Caco-2 (cell line): ENCODE measurements at regions of chr16 and their contacts with region 1.

Region 1: DNA sequence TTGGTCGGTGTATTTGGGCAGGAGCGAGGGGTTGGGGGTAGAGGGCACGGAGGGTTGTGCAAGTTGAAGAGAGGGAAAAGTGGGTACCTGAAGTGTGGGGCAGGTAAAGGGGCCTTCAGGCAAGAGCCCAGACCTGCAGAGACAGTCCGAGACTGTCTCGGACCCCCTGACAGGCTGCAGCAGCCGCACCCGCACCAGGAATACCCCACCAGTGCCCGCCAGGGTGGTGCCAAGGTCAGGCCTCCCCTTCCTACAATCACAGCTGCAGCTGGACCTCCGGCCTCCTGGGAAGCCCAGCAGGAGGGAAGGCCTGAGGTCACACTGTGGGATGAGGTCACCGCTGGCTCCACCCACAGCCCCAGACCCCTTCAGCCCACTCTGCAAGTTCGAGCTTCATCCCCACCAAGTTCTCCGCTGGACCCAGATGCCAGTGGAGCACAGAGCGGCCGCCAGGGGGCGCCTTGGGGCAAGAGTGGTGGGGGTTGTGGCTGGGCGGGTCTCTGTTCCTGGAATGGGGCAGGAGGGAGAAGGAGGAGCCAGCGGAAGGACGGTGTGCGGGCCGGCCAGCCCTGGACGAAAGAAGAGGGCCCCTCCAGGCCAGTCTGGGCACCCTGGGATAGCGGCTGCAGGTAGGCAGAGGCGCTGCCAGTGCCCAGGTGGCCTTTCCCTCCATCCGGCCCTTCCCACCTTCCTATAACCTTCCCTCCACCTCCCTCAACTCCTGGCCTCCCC is at the start of gene HSD3B7:
- DNase-seq: peak; percentile 83 to 90
- H3K4me3 ChIP-seq: 0 out of 2 replicates have a peak within 1 kb of the TSS, but pooled peaks have one; percentile 15
- H3K4me3 Mint-ChIP-seq: peak within 1 kb of the TSS; percentile 59
- H3K27ac Mint-ChIP-seq: no peak within 1 kb of the TSS
- H3K4me1 ChIP-seq: peaks cover 7% of the 10 kb centered on the region
- H3K4me1 Mint-ChIP-seq: peaks cover 6% of the 10 kb centered on the region
- H3K27me3 ChIP-seq: no peaks in the 10 kb centered on the region
- H3K27me3 Mint-ChIP-seq: no peaks in the 10 kb centered on the region
- CTCF ChIP-seq: peak; percentile 83 to 93
- total RNA-seq, gene HSD3B7: 1.3 and 2.4 TPM in 2 replicates

Region 2: DNA sequence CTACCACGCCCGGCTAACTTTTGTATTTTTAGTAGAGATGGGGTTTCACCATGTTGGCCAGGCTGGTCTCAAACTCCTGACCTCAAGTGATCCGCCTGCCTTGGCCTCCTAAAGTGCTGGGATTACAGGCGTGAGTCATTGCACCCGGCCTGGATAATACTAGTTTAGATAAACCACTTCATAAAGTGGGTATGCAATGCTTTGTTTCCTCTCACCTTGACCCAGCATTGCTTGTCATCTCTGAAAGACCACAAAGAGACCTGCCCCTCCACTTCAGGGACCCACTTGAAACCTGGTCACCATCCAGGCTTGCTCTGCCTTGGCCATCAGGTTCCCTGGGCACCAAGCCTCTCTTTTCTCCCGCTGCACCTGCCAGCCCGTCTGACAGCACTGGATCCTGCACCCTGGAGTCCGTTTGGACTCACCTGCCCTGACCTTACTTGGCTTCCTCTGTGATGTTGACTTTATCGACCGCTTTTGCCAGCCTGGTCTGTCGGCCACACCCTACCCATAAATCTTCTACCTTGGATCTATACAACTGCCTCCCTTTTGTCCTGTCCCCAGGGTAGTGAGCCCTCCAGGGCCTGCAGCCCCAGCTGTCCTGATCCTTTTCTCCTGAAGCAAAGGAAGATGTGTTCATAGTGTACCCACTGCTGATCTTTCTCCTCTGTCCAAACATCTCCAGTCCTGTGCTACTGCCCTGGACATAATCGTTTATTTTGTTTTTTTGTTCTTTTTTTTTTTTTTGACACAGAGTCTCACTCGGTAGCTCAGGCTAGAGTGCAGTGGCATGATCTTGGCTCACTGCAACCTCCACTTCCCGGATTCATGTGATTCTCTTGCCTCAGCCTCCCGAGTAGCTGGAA is 1219.4 kb before region 1 on chr16:
- CTCF ChIA-PET with region 1: no interaction called
- POLR2A ChIA-PET with region 1: no interaction called
- intact Hi-C with region 1: no loop called
- DNase-seq: peak; percentile 42 to 63
- H3K4me3 ChIP-seq: no peak overlapping the region
- H3K4me3 Mint-ChIP-seq: peak overlapping the region; percentile 9
- H3K27ac Mint-ChIP-seq: peak overlapping the region; percentile 70
- H3K4me1 ChIP-seq: peaks cover 15% of the 10 kb centered on the region
- H3K4me1 Mint-ChIP-seq: peaks cover 27% of the 10 kb centered on the region
- H3K27me3 ChIP-seq: no peaks in the 10 kb centered on the region
- H3K27me3 Mint-ChIP-seq: no peaks in the 10 kb centered on the region
- CTCF ChIP-seq: no peak

Region 3: DNA sequence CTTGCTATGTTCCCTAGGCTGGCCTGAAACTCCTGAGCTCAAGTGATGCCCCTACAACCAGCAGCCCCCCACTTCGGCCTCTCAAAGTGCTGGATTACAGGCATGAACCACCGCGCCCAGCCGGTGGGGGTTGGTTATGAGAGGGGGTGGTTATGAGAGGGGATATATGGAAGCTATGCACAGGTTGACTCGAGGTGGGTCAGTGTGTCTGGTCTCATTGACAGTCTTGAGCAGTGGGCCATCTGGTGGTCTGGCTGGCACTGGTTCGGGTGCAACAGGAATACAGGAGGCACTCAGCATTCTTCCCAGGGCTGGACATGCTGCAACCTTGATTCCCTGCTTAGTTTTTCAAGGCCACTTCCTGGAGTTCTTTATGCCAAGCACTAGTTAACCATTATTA is 31.2 kb after region 1 on chr16:
- CTCF ChIA-PET with region 1: no interaction called
- POLR2A ChIA-PET with region 1: no interaction called
- intact Hi-C with region 1: loop called (anchors 2 kb)
- DNase-seq: peak in 1 of 2 experiments; percentile 25
- H3K4me3 ChIP-seq: no peak overlapping the region
- H3K4me3 Mint-ChIP-seq: no peak overlapping the region
- H3K27ac Mint-ChIP-seq: no peak overlapping the region
- H3K4me1 ChIP-seq: no peaks in the 10 kb centered on the region
- H3K4me1 Mint-ChIP-seq: no peaks in the 10 kb centered on the region
- H3K27me3 ChIP-seq: no peaks in the 10 kb centered on the region
- H3K27me3 Mint-ChIP-seq: peaks cover 11% of the 10 kb centered on the region
- CTCF ChIP-seq: no peak

Region 4: GRCh38 chr16:31094424-31095120 is 109.7 kb after region 1 on chr16 and contains the start of gene VKORC1:
- CTCF ChIA-PET with region 1: no interaction called
- POLR2A ChIA-PET with region 1: no interaction called
- intact Hi-C with region 1: loop called (anchors 2 kb)
- DNase-seq: peak; percentile 96 to 97
- H3K4me3 ChIP-seq: peak within 1 kb of the TSS; percentile 97
- H3K4me3 Mint-ChIP-seq: peak within 1 kb of the TSS; percentile 98
- H3K27ac Mint-ChIP-seq: peak within 1 kb of the TSS; percentile 92
- H3K4me1 ChIP-seq: no peaks in the 10 kb centered on the region
- H3K4me1 Mint-ChIP-seq: peaks cover 15% of the 10 kb centered on the region
- H3K27me3 ChIP-seq: no peaks in the 10 kb centered on the region
- H3K27me3 Mint-ChIP-seq: no peaks in the 10 kb centered on the region
- CTCF ChIP-seq: no peak
- total RNA-seq, gene VKORC1: 61.3 and 61.4 TPM in 2 replicates